Aorta (tissue), 5 donors: ENCODE measurements at regions of chr1 and their contacts with region 1.

Region 1: DNA sequence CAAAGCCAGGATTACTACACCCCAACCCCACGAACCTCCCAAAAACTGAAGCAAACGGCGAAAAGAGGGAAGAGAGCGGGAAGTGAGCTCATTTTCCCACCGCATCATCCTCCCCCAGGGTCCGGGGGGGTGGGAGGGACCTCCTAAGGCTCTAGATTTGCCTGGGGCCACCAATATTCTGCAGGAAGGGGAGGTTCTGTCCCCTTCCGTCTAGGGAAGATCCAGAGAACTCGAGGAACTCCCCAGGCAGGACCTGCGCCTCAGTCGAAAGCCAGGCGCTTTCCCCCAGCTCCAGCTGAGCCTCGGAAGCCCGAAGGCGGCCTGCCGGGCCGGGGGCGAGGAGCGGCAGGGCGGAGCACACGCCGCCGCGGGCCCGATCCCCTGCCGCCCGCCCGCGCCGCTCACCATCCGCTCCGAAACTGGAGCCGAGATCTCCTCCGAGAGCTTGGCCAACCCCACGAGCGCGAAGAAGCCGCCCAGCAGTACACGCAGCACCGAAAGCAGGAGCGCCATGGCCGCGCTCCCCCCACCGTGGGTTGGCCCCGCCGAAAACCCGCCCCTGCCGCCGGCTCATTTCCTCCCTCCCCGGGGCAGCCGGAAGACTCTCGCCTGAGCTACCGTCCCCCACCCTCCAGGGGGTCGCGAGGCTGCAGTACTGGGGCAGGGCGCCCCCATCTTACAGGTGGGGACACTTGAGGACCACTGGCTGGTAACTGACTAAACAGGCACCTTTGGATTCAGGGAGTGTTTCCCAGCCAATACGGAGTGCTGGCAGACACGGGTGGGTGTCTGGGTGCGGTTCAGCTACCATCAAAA is at the start of gene TMEM35B:
- DNase-seq: peak; percentile 85 to 93
- ATAC-seq: peak; percentile 93
- H3K4me3 ChIP-seq: peak within 1 kb of the TSS; percentile 9 to 93
- H3K27ac ChIP-seq: peak within 1 kb of the TSS; percentile 45 to 88
- H3K4me1 ChIP-seq: peaks cover 0 to 4% of the 10 kb centered on the region in 2 donors
- H3K27me3 ChIP-seq: no peaks in the 10 kb centered on the region
- total RNA-seq, gene TMEM35B: 25.7 to 40.1 TPM

Region 2: DNA sequence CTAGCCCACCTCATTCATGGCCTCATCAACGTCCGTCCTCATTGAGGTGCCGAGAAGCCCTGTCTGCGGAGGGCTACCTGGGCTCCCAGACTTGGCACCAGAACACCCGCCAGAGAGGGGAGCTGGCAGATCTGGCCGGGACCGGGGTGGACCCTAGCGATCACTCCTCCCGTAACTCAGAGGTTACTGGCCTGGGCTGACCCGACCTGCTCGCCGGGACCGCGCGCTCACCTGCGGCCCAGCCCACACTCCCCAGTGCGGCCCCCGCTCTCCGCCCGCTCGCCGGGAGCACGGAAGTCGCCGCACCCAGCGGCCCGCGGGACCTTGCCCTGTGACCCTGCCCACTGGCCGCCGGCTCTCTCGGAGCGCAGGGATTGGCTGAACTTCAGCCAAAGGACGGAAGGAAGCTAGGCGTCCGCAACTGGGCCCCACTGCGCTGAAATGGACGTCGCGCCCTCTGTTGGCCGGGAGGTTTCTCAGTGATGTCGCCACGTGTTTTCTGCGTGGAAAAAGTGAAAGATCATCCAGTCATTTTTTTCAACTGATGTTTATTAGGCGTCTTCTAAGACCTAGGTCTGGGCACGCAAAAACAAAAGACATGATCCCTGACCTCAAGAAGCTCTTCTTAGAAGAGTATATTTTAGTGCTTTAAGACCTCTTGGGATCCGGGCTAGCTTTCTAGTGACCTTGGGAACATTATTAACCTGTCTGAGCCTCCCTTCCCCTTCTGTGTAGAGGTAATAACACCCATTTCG is 125.4 kb before region 1 on chr1 and contains the start of gene SMIM12:
- intact Hi-C with region 1: loop called in 1 of 2 experiments (anchors 2 kb)
- DNase-seq: peak; percentile 97 to 99
- ATAC-seq: peak; percentile 98
- H3K4me3 ChIP-seq: peak within 1 kb of the TSS; percentile 84 to 94
- H3K27ac ChIP-seq: peak within 1 kb of the TSS; percentile 24 to 88
- H3K4me1 ChIP-seq: peaks cover 0 to 3% of the 10 kb centered on the region in 2 donors
- H3K27me3 ChIP-seq: no peaks in the 10 kb centered on the region
- total RNA-seq, gene SMIM12: 38.1 to 58.8 TPM

Region 3: GRCh38 chr1:35030756-35031446 is 45.9 kb after region 1 on chr1:
- intact Hi-C with region 1: loop called in 1 of 2 experiments (anchors 5 kb)
- DNase-seq: no peak
- ATAC-seq: peak; percentile 47
- H3K4me3 ChIP-seq: peak overlapping the region; percentile 81 to 98
- H3K27ac ChIP-seq: peak overlapping the region; percentile 16 to 100
- H3K4me1 ChIP-seq: peaks cover 2% of the 10 kb centered on the region in 2 donors
- H3K27me3 ChIP-seq: no peaks in the 10 kb centered on the region

Region 4: GRCh38 chr1:35369922-35370671 is 385.1 kb after region 1 on chr1:
- intact Hi-C with region 1: no loop called
- DNase-seq: peak; percentile 82
- ATAC-seq: peak; percentile 82
- H3K4me3 ChIP-seq: peak overlapping the region in 1 of 2 donors; percentile 26
- H3K27ac ChIP-seq: peak overlapping the region in 1 of 2 donors; percentile 67
- H3K4me1 ChIP-seq: no peaks in the 10 kb centered on the region
- H3K27me3 ChIP-seq: no peaks in the 10 kb centered on the region